Activated naive CD8-positive, alpha-beta T cell treated with anti-CD3 and anti-CD28 coated beads, Interleukin-2, amount 10 ng/mL, durations not matched to agents 7 days and 5 days (primary cell): ENCODE measurements at regions of chr17 and their contacts with region 1.

Region 1: GRCh38 chr17:43316522-43317142 is 82.2 kb upstream of the ARL4D start:
- DNase-seq: peak; percentile 47
- ATAC-seq: no peak
- H3K4me3 Mint-ChIP-seq: no peak overlapping the region
- H3K27ac Mint-ChIP-seq: peak overlapping the region; percentile 68
- H3K4me1 Mint-ChIP-seq: peaks cover 7% of the 10 kb centered on the region
- H3K27me3 Mint-ChIP-seq: no peaks in the 10 kb centered on the region

Region 2: DNA sequence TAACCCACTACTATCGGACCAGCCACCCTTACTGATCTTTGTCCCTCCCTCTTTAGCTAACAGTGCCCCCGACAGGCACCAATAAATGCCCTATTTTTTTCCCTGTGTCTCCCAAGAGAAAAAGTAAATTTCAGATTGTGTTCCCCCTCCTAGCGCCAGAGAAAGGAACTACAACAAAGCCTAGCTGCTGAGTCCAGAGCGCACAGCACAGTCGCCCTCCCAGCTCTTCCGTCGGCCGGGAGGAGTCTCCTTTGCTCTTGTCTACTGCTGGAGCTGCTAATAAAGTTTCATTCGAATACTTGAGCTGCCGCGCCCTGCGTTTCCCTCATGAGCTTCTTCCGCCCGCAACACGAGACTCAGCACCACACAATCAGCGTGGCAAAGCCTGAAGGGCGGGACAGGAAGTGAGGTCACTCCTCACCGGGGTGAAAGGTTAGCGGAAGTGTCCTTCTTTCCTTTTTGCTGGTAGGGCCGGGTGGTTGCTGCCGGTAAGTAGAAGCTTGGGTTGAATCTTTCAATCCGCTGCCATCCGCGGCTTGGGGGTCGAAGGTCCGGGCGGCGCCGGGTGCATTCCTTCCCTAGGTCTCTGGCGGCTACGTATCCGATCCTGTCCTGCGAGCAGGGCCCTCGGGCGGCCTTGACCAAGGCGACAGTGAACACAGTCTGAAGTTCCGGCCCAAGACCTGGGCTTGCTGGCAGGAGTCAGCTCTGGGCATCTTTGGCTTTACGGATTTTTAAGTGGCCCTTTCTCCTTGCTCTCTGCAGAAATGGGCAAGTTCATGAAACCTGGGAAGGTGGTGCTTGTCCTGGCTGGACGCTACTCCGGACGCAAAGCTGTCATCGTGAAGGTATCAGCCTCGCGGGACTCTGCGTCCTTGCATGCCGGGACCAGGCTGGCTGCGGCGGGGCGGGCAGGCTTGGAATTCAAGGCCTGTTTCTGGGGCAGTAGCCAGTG is 318.4 kb before region 1 on chr17 and contains the start of gene RPL27:
- POLR2A ChIA-PET with region 1: interaction called, 29 read pairs
- DNase-seq: peak; percentile 91
- ATAC-seq: peak; percentile 98
- H3K4me3 Mint-ChIP-seq: peak within 1 kb of the TSS; percentile 92
- H3K27ac Mint-ChIP-seq: peak within 1 kb of the TSS; percentile 84
- H3K4me1 Mint-ChIP-seq: peaks cover 27% of the 10 kb centered on the region
- H3K27me3 Mint-ChIP-seq: no peaks in the 10 kb centered on the region
- total RNA-seq, gene RPL27: 1,039 to 1,066 TPM

Region 3: GRCh38 chr17:43125133-43125966 is 191.3 kb before region 1 on chr17 and contains the start of gene BRCA1:
- POLR2A ChIA-PET with region 1: interaction called, 21 read pairs
- DNase-seq: peak; percentile 89
- ATAC-seq: peak; percentile 99
- H3K4me3 Mint-ChIP-seq: peak within 1 kb of the TSS; percentile 97
- H3K27ac Mint-ChIP-seq: peak within 1 kb of the TSS; percentile 98
- H3K4me1 Mint-ChIP-seq: peaks cover 25% of the 10 kb centered on the region
- H3K27me3 Mint-ChIP-seq: no peaks in the 10 kb centered on the region
- total RNA-seq, gene BRCA1: 53.5 to 61.4 TPM

Region 4: DNA sequence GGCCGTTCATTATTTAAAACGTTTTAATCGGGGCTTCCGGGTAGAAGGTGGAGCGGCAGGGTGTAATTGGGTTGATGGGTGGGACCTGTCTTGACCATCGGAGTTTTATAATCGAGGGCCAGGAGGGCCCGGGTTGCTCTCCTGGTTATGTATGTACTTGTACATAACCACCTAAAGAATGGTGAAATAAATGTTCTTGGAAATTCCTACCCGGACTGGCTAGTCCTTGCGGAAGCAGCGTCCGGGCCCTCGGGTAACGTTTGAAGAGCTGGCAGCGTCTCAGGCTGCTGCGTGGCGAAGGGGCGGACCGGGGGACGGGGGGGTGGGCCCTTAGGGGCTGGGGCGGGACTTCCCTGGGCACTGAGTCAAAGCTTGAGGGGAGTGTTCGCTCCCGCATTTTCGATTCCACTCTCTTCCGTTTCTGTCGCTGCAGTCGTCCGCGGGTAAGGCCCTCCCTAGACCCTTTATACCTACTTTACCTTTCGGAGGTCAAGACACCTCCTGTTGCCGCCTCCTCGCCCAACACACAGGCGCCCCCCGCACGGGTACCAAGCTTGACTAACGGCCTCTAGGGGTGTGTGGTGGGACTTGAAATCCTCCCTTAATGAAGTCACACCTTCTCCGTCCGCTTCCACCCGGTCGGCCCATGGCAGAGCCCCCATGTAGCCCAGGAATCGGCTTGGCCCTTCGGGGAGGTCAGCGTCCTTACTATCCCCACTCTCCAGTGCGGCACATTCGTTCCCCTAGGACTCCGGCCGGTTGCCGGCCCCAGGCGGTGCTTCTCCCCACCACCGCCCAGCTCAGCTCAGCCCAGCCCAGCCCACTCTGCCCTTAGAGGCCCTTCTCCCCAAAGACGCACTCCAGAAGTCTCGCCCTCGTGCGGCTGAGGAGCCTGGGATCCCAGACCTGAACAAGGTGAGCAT is 104.9 kb before region 1 on chr17 and contains the start of gene TMEM106A:
- POLR2A ChIA-PET with region 1: interaction called, 221 read pairs
- DNase-seq: peak; percentile 80
- ATAC-seq: peak; percentile 90
- H3K4me3 Mint-ChIP-seq: peak within 1 kb of the TSS; percentile 98
- H3K27ac Mint-ChIP-seq: peak within 1 kb of the TSS; percentile 94
- H3K4me1 Mint-ChIP-seq: peaks cover 18% of the 10 kb centered on the region
- H3K27me3 Mint-ChIP-seq: no peaks in the 10 kb centered on the region
- total RNA-seq, gene TMEM106A: 20.3 TPM

Region 5: GRCh38 chr17:43360739-43361505 is 44.3 kb after region 1 on chr17:
- POLR2A ChIA-PET with region 1: interaction called, 96 read pairs
- DNase-seq: peak; percentile 85
- ATAC-seq: peak; percentile 88
- H3K4me3 Mint-ChIP-seq: peak overlapping the region; percentile 93
- H3K27ac Mint-ChIP-seq: peak overlapping the region; percentile 100
- H3K4me1 Mint-ChIP-seq: peaks cover 27% of the 10 kb centered on the region
- H3K27me3 Mint-ChIP-seq: no peaks in the 10 kb centered on the region

Region 6: DNA sequence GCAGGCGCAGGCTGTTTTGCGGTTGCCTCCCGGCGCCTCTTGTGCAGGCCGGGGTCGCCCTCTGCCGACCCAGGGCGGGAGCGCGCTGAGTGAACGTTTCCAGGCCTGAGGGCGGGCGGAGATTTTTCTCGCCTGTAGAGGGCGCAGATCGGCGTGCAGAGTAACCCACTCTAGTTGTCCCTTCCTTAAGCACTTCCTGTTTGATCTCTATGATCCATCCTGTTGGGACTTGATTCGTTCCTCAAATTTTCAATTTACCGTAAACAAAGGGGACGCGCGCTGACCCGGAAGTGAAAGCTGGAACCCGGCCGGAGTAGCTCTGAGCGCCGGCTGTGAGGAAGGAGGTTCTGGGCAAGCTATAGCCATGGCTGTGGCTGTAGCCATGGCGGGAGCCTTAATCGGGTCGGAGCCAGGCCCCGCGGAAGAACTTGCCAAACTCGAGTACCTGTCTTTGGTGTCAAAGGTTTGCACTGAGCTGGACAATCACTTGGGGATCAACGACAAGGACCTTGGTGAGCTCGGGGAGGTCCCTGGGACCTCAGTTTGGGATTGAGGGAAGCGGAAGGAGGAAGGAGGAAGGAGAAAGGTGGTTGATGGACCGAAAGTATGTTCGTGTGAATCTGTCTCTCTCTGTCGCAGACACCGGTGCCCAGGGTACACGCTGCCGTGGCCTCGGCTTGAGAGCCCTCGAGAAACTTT is 167.2 kb after region 1 on chr17 and contains the start of gene DHX8:
- POLR2A ChIA-PET with region 1: interaction called, 22 read pairs
- DNase-seq: peak; percentile 99
- ATAC-seq: peak; percentile 98
- H3K4me3 Mint-ChIP-seq: peak within 1 kb of the TSS; percentile 88
- H3K27ac Mint-ChIP-seq: peak within 1 kb of the TSS; percentile 90
- H3K4me1 Mint-ChIP-seq: peaks cover 16% of the 10 kb centered on the region
- H3K27me3 Mint-ChIP-seq: peaks cover 3% of the 10 kb centered on the region
- total RNA-seq, gene DHX8: 60.6 to 62.9 TPM